B cell (primary cell): ENCODE measurements at regions of chrX and their contacts with region 1.

Region 1: DNA sequence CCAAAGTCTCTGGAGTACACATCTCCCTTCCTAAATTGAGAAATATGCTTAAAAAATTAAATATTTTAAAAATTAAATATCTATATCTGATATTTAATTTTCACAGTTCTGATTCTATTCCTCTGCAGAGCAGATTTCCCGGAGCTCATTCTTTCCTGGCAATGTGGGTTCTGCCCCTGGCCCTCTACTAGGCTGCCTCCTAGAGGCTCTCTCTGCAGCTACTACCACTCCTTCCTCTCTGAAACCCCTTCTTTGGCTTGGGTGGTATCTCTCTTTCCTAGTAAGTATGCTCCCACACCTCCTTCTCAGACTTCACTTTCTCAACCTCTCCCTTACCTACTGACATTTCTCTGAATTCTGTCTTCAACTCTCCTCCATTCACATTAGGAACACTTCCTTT is 45.3 kb downstream of the RPGR start:
- DNase-seq: no peak
- ATAC-seq: no peak
- H3K4me3 ChIP-seq: no peak overlapping the region
- H3K4me3 Mint-ChIP-seq: no peak overlapping the region
- H3K27ac ChIP-seq: no peak overlapping the region
- H3K27ac Mint-ChIP-seq: no peak overlapping the region
- H3K4me1 ChIP-seq: no peaks in the 10 kb centered on the region
- H3K4me1 Mint-ChIP-seq: peaks cover 3% of the 10 kb centered on the region
- H3K27me3 ChIP-seq: no peaks in the 10 kb centered on the region
- H3K27me3 Mint-ChIP-seq: no peaks in the 10 kb centered on the region
- CTCF ChIP-seq: no peak

Region 2: GRCh38 chrX:38166478-38167083 is 115.5 kb before region 1 on chrX:
- CTCF ChIA-PET with region 1: no interaction called
- POLR2A ChIA-PET with region 1: no interaction called
- intact Hi-C with region 1: no loop called
- DNase-seq: peak; percentile 37
- ATAC-seq: no peak
- H3K4me3 ChIP-seq: no peak overlapping the region
- H3K4me3 Mint-ChIP-seq: no peak overlapping the region
- H3K27ac ChIP-seq: no peak overlapping the region
- H3K27ac Mint-ChIP-seq: no peak overlapping the region
- H3K4me1 ChIP-seq: no peaks in the 10 kb centered on the region
- H3K4me1 Mint-ChIP-seq: no peaks in the 10 kb centered on the region
- H3K27me3 ChIP-seq: no peaks in the 10 kb centered on the region
- H3K27me3 Mint-ChIP-seq: peaks cover 3% of the 10 kb centered on the region
- CTCF ChIP-seq: peak; percentile 65

Region 3: GRCh38 chrX:38206036-38206435 is 76.0 kb before region 1 on chrX:
- CTCF ChIA-PET with region 1: no interaction called
- POLR2A ChIA-PET with region 1: no interaction called
- intact Hi-C with region 1: loop called (anchors 10 kb)
- DNase-seq: no peak
- ATAC-seq: no peak
- H3K4me3 ChIP-seq: no peak overlapping the region
- H3K4me3 Mint-ChIP-seq: no peak overlapping the region
- H3K27ac ChIP-seq: no peak overlapping the region
- H3K27ac Mint-ChIP-seq: no peak overlapping the region
- H3K4me1 ChIP-seq: peaks cover 3 to 4% of the 10 kb centered on the region in 2 donors
- H3K4me1 Mint-ChIP-seq: peaks cover 6% of the 10 kb centered on the region
- H3K27me3 ChIP-seq: no peaks in the 10 kb centered on the region
- H3K27me3 Mint-ChIP-seq: no peaks in the 10 kb centered on the region
- CTCF ChIP-seq: no peak

Region 4: GRCh38 chrX:38260231-38260630 is 21.8 kb before region 1 on chrX:
- CTCF ChIA-PET with region 1: no interaction called
- POLR2A ChIA-PET with region 1: no interaction called
- intact Hi-C with region 1: no loop called
- DNase-seq: no peak
- ATAC-seq: no peak
- H3K4me3 ChIP-seq: no peak overlapping the region
- H3K4me3 Mint-ChIP-seq: no peak overlapping the region
- H3K27ac ChIP-seq: no peak overlapping the region
- H3K27ac Mint-ChIP-seq: no peak overlapping the region
- H3K4me1 ChIP-seq: no peaks in the 10 kb centered on the region
- H3K4me1 Mint-ChIP-seq: no peaks in the 10 kb centered on the region
- H3K27me3 ChIP-seq: no peaks in the 10 kb centered on the region
- H3K27me3 Mint-ChIP-seq: no peaks in the 10 kb centered on the region
- CTCF ChIP-seq: no peak